ENCODE measurements at regions of chr17 and their contacts with region 1.

Region 1: DNA sequence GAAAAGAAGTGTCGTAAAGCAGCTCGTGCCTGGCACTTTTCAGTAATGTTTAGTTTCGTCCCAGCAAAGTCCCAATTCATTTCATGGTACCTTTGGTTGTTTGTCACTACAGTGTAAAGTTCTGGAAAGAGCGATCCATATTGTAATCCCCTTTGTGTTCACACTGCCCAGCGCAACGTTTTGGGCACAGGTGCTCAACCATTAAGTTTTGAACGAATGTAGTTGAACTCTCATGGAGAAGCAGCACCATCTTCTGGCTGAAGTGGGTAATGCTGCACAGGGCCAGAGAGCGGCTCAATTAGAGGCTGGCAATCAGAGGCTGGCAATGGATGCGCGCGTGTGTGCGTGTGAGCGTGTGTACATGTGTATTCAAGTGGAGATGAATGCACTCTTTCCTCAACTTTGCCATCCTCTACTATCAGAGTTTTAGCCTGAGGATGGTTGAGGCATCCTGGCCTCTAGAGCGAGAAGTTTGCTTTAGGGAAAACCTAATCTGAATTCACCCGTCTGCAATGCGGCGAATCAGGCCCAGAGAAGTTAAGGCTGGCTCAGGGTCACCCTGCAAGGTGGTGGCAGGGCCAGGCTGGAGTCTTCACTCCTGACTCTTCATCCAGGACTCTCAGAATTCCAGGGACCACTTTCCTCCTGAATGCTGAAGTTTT is 29.9 kb downstream of the DYNLL2 start:
- DNase-seq: peak; percentile 78 to 79
- ATAC-seq: peak; percentile 80 to 87
- H3K4me3 ChIP-seq: no peak overlapping the region
- H3K27ac ChIP-seq: no peak overlapping the region
- H3K4me1 ChIP-seq: no peaks in the 10 kb centered on the region
- CTCF ChIP-seq: peak; percentile 96
- EP300 ChIP-seq: no peak
- POLR2A ChIP-seq: no peak
- RAD21 ChIP-seq: peak; percentile 98 to 99

Region 2: DNA sequence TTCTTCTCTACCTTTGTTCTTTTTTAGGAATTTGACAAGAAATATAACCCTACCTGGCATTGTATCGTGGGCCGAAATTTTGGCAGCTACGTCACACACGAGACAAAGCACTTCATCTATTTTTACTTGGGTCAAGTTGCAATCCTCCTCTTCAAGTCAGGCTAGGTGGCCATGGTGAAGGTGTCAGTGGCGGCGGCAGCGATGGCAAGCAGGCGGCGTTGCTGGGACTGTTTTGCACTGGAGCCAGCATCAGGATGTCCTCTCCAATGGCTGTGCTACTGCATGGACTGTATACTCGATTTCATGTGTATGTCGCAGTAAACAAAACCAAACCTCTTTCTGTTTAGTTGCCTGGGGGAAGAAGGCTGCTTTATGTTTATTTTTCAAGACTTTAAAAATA is 24.0 kb before region 1 on chr17:
- CTCF ChIA-PET with region 1: interaction called, 16 read pairs
- POLR2A ChIA-PET with region 1: no interaction called
- DNase-seq: no peak
- ATAC-seq: no peak
- H3K4me3 ChIP-seq: no peak overlapping the region
- H3K27ac ChIP-seq: no peak overlapping the region
- H3K4me1 ChIP-seq: peaks cover 12% of the 10 kb centered on the region
- CTCF ChIP-seq: no peak
- EP300 ChIP-seq: no peak
- POLR2A ChIP-seq: no peak
- RAD21 ChIP-seq: no peak

Region 3: DNA sequence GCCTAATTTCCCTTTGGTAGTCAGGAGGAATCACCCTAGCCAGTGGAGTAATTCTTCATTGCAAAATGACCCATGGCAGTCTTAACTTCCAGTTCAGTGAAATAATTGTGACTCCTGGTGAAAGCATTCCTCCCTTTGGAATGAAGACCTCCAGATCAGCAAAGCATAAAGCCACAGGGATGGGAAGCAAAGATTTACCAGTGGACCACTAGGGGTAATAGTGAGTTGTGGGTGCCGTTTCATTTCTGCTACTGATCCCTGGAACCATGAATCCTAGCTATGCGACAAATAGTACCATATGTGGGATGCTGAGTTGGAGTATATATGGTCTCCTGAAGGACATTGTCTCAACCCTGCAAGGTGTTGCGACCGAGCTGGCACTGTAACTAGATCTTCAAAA is 16.2 kb before region 1 on chr17:
- CTCF ChIA-PET with region 1: interaction called, 18 read pairs
- POLR2A ChIA-PET with region 1: no interaction called
- DNase-seq: no peak
- ATAC-seq: peak in 1 of 2 experiments; percentile 75; a peak in 3 of 6 replicates
- H3K4me3 ChIP-seq: no peak overlapping the region
- H3K27ac ChIP-seq: no peak overlapping the region
- H3K4me1 ChIP-seq: no peaks in the 10 kb centered on the region
- CTCF ChIP-seq: no peak
- EP300 ChIP-seq: no peak
- POLR2A ChIP-seq: no peak
- RAD21 ChIP-seq: no peak

Region 4: DNA sequence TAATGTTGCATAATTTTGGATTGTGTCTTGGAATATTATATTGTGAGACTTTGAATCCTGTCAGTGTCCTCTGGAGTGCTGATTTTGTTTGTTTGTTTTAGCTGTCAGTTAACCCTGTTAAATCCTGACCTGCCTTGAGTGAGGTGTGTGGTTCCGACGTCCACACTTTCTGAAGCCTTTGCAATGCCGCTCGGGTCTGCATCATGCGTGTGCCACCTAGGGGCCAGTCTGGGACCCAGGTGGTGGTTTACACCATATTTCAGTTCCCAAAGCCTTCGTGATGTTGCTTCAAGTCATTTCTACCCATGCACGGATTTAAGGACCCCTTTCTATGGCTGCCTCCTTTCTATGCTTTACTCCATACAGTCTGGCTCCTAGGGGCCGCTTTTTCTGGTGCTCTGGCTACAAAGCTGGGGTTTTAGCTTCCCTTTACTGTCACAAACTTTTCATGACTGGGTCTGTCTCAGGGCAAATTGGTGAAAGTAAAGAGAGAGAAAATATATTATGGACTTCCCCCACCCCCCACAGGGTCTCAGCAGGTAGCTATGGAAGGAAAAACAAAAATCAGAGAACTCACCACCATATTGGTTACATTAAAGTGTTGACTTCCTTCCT is 23.7 kb after region 1 on chr17:
- CTCF ChIA-PET with region 1: interaction called, 21 read pairs
- POLR2A ChIA-PET with region 1: no interaction called
- DNase-seq: peak; percentile 53 to 57
- ATAC-seq: peak; percentile 94 to 96
- H3K4me3 ChIP-seq: no peak overlapping the region
- H3K27ac ChIP-seq: no peak overlapping the region
- H3K4me1 ChIP-seq: no peaks in the 10 kb centered on the region
- CTCF ChIP-seq: peak; percentile 61
- EP300 ChIP-seq: no peak
- POLR2A ChIP-seq: no peak
- RAD21 ChIP-seq: peak; percentile 55 to 69

Measured in A549 (cell line).